ENCODE measurements at regions of chr11 and their contacts with region 1.

Region 1: DNA sequence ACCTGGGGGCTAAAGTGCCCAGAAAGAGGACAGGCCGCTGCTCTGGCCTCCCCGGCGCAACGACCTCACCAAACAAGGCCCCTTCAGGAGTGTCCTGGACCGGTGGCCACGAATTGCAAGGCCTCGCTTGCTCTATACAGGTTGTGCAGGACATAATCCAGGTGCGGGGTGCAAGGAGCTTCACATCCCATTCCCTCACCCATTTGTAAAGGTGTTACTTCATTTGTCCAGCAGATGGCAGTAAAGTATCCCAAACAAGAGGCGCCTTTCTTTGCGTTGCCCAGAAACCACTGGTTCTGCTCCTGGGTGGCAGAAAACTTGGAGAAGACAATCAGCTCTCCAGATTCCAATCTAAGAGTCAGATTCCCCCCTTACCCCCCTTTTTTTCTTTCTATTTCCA is 35.9 kb upstream of the PRDM11 start:
- DNase-seq: peak; percentile 92
- H3K4me3 ChIP-seq: no peak overlapping the region
- H3K27ac ChIP-seq: no peak overlapping the region
- H3K4me1 ChIP-seq: no peaks in the 10 kb centered on the region
- H3K27me3 ChIP-seq: peaks cover 12% of the 10 kb centered on the region
- CTCF ChIP-seq: peak; percentile 91

Region 2: DNA sequence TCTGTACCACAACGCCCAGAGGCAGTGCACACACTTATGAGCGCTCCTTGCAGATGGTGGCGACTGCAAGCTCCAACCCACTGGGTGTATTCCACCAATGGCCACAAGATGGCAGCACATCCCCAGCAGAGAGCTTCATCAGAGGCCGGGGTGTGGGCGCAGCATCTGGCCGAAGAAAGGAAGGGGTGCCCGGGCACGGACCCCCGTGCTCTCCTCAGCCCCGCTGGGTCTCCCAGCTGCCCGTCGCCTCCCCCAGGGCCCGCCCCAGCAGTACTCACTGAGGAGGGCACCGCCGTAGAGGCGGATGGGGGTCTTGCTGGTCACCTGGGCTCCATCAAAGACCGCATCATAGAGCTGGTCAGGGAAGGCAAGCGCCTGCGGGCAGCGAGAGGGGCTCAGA is 174.0 kb before region 1 on chr11:
- CTCF ChIA-PET with region 1: interaction called, 299 read pairs
- POLR2A ChIA-PET with region 1: interaction called, 3 read pairs
- intact Hi-C with region 1: loop called (anchors 1 kb)
- DNase-seq: peak; percentile 93
- H3K4me3 ChIP-seq: no peak overlapping the region
- H3K27ac ChIP-seq: no peak overlapping the region
- H3K4me1 ChIP-seq: peaks cover 5% of the 10 kb centered on the region
- H3K27me3 ChIP-seq: no peaks in the 10 kb centered on the region
- CTCF ChIP-seq: peak; percentile 100

Region 3: DNA sequence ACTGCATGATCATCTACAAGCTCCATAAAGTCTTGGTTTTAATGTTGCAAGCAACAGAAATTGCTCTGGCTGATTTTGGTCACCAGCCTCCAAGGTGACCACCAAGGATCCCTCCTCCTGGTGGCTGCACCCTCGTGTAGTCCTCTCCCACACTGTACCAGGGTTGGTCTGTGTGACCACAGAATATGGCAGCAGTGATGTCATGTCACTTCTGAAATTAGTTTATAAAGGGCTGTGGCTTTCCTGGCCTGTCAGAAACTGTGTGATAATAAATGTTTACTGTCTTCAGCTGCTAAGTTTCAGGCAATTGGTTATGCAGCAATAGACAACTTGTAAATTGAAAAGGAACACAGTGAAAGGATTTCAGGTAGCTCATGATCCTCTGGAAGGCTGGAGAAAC is 30.6 kb after region 1 on chr11:
- CTCF ChIA-PET with region 1: no interaction called
- POLR2A ChIA-PET with region 1: no interaction called
- intact Hi-C with region 1: no loop called
- DNase-seq: no peak
- H3K4me3 ChIP-seq: no peak overlapping the region
- H3K27ac ChIP-seq: no peak overlapping the region
- H3K4me1 ChIP-seq: peaks cover 8% of the 10 kb centered on the region
- H3K27me3 ChIP-seq: peaks cover 12% of the 10 kb centered on the region
- CTCF ChIP-seq: no peak

Region 4: GRCh38 chr11:45246241-45246640 is 135.7 kb after region 1 on chr11:
- CTCF ChIA-PET with region 1: no interaction called
- POLR2A ChIA-PET with region 1: no interaction called
- intact Hi-C with region 1: no loop called
- DNase-seq: no peak
- H3K4me3 ChIP-seq: no peak overlapping the region
- H3K27ac ChIP-seq: no peak overlapping the region
- H3K4me1 ChIP-seq: no peaks in the 10 kb centered on the region
- H3K27me3 ChIP-seq: no peaks in the 10 kb centered on the region
- CTCF ChIP-seq: no peak

Region 5: DNA sequence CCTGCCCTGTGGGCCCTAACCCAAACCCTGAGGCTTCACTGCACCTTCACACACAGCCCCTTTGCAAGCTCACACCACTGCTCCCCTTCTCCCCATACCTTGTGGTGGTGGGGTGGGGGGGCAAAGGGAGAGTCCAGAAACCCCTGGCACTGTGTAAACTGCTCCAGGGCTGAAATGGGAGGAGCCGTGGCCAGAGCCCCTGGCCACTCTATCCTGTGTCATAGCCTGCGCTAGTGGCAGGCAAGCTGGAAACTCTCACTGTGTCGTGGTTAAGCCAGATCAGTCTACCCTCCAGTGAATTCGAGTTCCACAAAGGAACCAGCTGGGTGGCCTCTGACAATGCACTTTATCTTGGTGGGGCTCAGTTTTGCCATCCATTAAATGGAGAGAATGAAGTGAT is 183.9 kb after region 1 on chr11:
- CTCF ChIA-PET with region 1: interaction called, 13 read pairs
- POLR2A ChIA-PET with region 1: no interaction called
- intact Hi-C with region 1: loop called (anchors 1 kb)
- DNase-seq: no peak
- H3K4me3 ChIP-seq: no peak overlapping the region
- H3K27ac ChIP-seq: no peak overlapping the region
- H3K4me1 ChIP-seq: no peaks in the 10 kb centered on the region
- H3K27me3 ChIP-seq: peaks cover 29% of the 10 kb centered on the region
- CTCF ChIP-seq: no peak

Region 6: DNA sequence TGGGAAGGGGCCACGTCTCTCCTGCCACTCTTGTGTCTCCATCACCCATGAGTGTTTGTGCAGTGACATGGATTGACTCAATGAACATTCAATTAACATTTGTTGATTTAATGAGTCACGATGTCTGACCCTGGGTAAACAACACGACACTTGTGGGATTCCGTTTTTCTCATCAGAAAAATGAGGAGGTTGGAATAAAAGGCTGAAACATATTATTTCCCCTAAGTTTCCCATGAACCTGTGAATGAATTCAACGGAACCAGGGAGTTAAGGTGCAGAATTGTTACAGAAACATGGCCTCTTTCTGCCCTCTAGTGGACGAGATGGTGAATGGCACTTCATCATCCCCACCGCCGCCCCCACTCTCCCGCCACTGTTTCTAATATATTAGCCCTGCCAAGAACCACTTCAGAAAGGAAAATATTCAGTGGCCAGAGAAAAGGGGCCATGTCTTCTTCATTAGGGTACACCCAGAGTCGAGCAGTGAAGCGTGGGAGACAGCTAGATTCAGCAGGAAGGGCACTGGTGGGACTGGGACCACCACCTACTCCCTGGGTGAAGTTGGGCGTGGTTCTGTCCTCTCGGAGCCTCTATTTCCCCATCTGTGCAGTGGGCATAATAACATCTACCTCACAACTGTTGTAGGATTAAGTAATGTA is 221.8 kb after region 1 on chr11:
- CTCF ChIA-PET with region 1: interaction called, 20 read pairs
- POLR2A ChIA-PET with region 1: no interaction called
- intact Hi-C with region 1: loop called (anchors 1 kb)
- DNase-seq: peak; percentile 80
- H3K4me3 ChIP-seq: no peak overlapping the region
- H3K27ac ChIP-seq: no peak overlapping the region
- H3K4me1 ChIP-seq: peaks cover 11% of the 10 kb centered on the region
- H3K27me3 ChIP-seq: no peaks in the 10 kb centered on the region
- CTCF ChIP-seq: peak; percentile 91